ENCODE measurements at regions of chr1 and their contacts with region 1.

Region 1: GRCh38 chr1:159936273-159936904 is 9.0 kb downstream of the IGSF9 start:
- DNase-seq: peak; percentile 85
- ATAC-seq: peak; percentile 91
- H3K4me3 ChIP-seq: no peak overlapping the region
- H3K27ac ChIP-seq: no peak overlapping the region
- H3K4me1 ChIP-seq: peaks cover 6% of the 10 kb centered on the region
- H3K27me3 ChIP-seq: no peaks in the 10 kb centered on the region
- CTCF ChIP-seq: peak; percentile 100

Region 2: GRCh38 chr1:159993911-159994310 is 57.5 kb after region 1 on chr1:
- intact Hi-C with region 1: no loop called
- DNase-seq: no peak
- ATAC-seq: no peak
- H3K4me3 ChIP-seq: no peak overlapping the region
- H3K27ac ChIP-seq: no peak overlapping the region
- H3K4me1 ChIP-seq: peaks cover 10% of the 10 kb centered on the region
- H3K27me3 ChIP-seq: peaks cover 4% of the 10 kb centered on the region
- CTCF ChIP-seq: no peak

Region 3: DNA sequence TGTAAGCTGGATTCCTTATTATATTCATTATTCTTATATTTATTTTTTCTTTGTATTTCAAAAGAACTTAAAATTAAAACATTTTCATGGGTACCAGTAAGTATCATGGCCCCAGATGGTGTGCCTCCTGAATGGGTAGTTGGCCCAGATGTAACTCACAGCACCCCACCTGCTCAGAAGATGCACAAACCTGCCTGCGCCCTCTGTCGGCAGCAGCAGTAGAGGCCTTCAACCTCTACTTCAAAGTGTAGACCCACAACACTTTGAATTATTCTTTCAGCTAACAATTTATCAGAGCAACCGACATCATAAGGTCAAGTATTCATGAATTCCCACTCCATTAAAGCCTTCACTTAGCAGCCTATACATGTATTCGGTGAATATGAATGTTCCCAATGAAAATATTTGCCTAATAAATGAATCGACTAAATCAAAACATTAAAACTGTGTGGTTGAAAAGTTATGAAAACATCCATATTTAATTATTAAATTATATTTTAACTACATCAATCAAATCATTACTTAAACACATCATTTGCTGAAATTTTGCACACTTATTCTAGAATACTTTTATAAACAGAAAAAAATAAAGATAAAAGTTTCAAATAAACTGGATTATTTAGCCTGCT is 70.0 kb after region 1 on chr1:
- intact Hi-C with region 1: loop called (anchors 5 kb)
- DNase-seq: peak; percentile 89
- ATAC-seq: peak; percentile 91
- H3K4me3 ChIP-seq: no peak overlapping the region
- H3K27ac ChIP-seq: no peak overlapping the region
- H3K4me1 ChIP-seq: no peaks in the 10 kb centered on the region
- H3K27me3 ChIP-seq: no peaks in the 10 kb centered on the region
- CTCF ChIP-seq: peak; percentile 87